Activated CD4-positive, alpha-beta T cell treated with anti-CD3 and anti-CD28 coated beads for 36 hours (primary cell): ENCODE measurements at regions of chr2 and their contacts with region 1.

Region 1: DNA sequence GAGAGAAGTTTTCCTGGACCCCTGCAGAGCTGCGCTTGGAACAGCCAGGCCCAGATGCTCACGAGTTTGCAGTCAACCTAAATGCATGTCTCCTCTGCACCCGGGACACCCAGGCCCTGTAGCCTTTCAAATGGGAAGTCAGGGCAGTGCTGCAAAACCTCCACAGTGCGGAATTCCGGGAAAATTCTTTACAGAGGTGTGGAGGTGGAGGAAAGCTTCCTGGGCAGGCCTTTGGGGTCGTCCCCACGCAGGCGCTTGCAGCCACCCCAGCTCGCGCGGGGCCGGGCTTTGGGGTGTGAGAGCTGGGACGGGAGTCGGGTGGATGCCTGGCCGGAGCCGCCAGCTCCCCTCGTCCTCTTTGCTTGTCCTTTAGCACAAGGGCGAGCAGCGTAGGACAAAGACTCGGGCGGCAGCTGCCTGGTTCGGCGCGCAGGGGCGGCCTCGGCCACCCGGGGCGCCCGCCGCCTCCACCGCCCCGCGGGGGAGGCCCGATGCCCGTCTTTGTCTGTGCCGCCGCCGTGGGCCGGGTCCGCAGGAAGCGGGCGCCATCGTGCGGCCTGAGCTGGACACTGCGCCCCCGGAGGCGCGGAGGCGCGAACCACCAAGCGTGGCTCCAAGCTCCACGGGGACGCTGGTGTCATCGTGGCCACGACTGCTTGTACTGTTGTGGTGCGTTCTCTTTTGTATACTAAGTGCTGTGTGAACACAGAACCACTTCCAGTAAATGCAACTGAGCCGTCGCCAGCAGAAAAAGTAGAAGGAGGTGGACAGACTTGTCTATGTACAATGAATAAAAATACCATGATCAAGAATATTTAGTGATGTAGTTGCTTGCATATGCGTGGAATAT is 28.2 kb upstream of the BCL11A start:
- DNase-seq: peak; percentile 83
- ATAC-seq: peak; percentile 97
- H3K4me3 Mint-ChIP-seq: no peak overlapping the region
- H3K27ac Mint-ChIP-seq: no peak overlapping the region
- H3K4me1 Mint-ChIP-seq: no peaks in the 10 kb centered on the region
- H3K27me3 Mint-ChIP-seq: peaks cover 26% of the 10 kb centered on the region

Region 2: DNA sequence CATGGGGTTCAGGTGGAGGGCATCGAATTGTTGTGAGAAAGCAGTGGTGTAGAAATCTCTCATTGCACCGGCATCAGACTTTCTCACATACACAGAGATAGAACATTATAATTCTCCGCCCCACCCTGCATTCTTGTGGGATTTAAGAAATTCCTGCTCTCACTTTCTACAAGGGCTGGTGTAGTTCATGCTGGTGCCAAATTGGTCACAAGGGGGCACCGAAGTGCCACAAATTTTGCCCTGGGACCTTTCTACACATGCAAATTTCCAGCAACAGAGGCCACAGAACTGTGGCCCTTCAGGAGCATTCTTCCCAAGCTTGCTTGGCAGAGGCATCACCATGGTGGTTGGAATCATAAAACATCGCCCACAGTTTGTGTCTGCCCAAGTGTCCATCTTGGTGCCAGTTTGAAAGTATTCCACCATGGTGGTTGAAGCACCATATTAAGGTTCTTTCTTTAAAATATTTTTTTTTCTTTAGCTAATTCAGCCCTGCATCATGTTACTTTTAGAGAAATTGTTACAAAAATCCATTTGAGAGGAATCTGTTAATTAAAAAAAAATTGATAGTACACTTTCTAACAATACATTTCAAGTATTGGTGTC is 1819.4 kb before region 1 on chr2:
- CTCF ChIA-PET with region 1: interaction called, 8 read pairs
- POLR2A ChIA-PET with region 1: no interaction called
- intact Hi-C with region 1: loop called in 1 of 2 experiments (anchors 5 kb)
- DNase-seq: peak; percentile 59
- ATAC-seq: no peak
- H3K4me3 Mint-ChIP-seq: no peak overlapping the region
- H3K27ac Mint-ChIP-seq: no peak overlapping the region
- H3K4me1 Mint-ChIP-seq: peaks cover 3% of the 10 kb centered on the region
- H3K27me3 Mint-ChIP-seq: peaks cover 2% of the 10 kb centered on the region

Region 3: DNA sequence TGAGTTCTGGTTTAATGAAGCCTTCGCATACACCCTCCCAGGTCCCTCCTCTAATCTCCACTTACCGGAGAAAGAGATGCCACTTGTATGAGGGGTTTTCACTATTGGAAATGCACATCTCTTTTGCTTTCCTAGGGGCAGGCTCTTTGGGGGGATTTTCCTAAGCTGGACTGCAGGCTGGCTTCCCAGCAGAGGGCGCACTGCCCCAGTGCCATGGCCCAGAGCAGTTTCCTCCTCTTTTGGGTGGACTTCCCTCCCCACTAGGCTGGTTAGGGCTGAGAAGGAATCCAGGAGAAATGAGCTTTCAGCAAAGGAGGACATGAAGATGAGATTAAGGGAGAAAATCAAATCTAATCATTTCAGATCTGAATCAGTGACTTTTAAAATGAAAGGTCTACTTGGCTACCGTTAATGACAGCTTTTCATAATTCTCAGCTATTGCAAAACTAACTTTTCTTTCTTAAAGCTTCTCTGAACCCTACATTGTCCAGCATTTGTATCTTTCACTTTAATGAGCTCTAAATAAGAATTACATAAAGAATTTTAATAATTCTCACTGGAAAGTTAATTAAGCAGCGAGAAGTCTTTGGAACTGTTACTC is 1556.4 kb before region 1 on chr2:
- CTCF ChIA-PET with region 1: no interaction called
- POLR2A ChIA-PET with region 1: no interaction called
- intact Hi-C with region 1: loop called in 1 of 2 experiments (anchors 5 kb)
- DNase-seq: peak; percentile 44
- ATAC-seq: no peak
- H3K4me3 Mint-ChIP-seq: no peak overlapping the region
- H3K27ac Mint-ChIP-seq: no peak overlapping the region
- H3K4me1 Mint-ChIP-seq: no peaks in the 10 kb centered on the region
- H3K27me3 Mint-ChIP-seq: no peaks in the 10 kb centered on the region

Region 4: DNA sequence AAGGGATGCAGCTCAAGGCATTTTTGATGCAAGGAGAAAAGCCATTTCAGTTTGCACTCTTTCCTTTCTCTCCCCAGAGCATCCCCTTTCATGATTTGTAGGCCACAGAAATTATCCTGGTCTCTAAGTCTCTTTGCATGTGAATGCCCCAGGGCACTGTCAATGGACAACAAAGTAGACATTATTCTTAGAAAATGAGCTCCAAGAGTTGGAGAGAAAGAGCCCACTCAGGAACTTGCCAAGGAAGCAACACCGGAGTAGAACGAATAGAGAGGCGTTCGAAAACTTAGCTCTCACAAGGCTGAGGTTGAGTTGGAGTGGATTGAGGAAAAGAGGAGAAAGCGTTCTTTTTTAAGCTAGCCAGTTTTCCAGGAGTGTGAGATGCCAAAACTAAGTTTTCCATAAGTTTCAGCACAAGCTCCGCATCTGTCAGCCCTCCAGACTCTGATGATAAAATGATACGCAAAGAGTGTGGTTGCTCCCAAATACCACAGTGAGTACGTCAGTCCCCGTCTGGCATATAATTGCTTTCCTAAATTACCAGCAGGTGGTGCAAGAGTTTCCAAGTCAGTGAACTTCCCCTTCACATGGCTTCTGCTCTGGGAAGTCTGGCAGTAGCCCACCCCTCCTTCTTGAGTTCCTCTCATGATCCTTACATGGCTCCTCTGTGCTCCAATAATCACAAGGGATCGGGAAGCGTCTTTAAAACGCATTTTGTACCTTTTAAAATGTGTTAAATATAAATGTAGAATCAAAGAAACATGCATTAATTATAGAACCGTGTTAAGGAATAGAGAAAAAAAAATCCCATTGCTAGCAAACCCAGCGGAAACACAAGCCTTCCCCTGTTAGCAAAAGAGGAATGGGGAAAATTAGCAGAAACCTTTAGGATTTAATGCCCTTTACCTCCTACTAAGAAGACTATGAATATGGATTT is 1279.9 kb before region 1 on chr2:
- CTCF ChIA-PET with region 1: interaction called, 5 read pairs
- POLR2A ChIA-PET with region 1: no interaction called
- intact Hi-C with region 1: loop called in 1 of 2 experiments (anchors 10 kb)
- DNase-seq: peak; percentile 7
- ATAC-seq: peak; percentile 42
- H3K4me3 Mint-ChIP-seq: no peak overlapping the region
- H3K27ac Mint-ChIP-seq: no peak overlapping the region
- H3K4me1 Mint-ChIP-seq: no peaks in the 10 kb centered on the region
- H3K27me3 Mint-ChIP-seq: no peaks in the 10 kb centered on the region

Region 5: GRCh38 chr2:60550178-60550983 is 31.3 kb before region 1 on chr2:
- CTCF ChIA-PET with region 1: interaction called, 11 read pairs
- POLR2A ChIA-PET with region 1: no interaction called
- intact Hi-C with region 1: no loop called
- DNase-seq: peak; percentile 77
- ATAC-seq: peak; percentile 67
- H3K4me3 Mint-ChIP-seq: peak overlapping the region; percentile 81
- H3K27ac Mint-ChIP-seq: peak overlapping the region; percentile 72
- H3K4me1 Mint-ChIP-seq: peaks cover 33% of the 10 kb centered on the region
- H3K27me3 Mint-ChIP-seq: peaks cover 47% of the 10 kb centered on the region

Region 6: GRCh38 chr2:60560734-60561644 is 20.7 kb before region 1 on chr2:
- CTCF ChIA-PET with region 1: interaction called, 30 read pairs
- POLR2A ChIA-PET with region 1: no interaction called
- intact Hi-C with region 1: loop called in 1 of 2 experiments (anchors 1 kb)
- DNase-seq: no peak
- ATAC-seq: peak; percentile 72
- H3K4me3 Mint-ChIP-seq: no peak overlapping the region
- H3K27ac Mint-ChIP-seq: no peak overlapping the region
- H3K4me1 Mint-ChIP-seq: peaks cover 14% of the 10 kb centered on the region
- H3K27me3 Mint-ChIP-seq: peaks cover 44% of the 10 kb centered on the region

Region 7: GRCh38 chr2:60569680-60570111 is 12.0 kb before region 1 on chr2:
- CTCF ChIA-PET with region 1: interaction called, 18 read pairs
- POLR2A ChIA-PET with region 1: no interaction called
- intact Hi-C with region 1: no loop called
- DNase-seq: no peak
- ATAC-seq: peak; percentile 19
- H3K4me3 Mint-ChIP-seq: no peak overlapping the region
- H3K27ac Mint-ChIP-seq: no peak overlapping the region
- H3K4me1 Mint-ChIP-seq: no peaks in the 10 kb centered on the region
- H3K27me3 Mint-ChIP-seq: peaks cover 27% of the 10 kb centered on the region